ENCODE measurements at regions of chr17 and their contacts with region 1.

Region 1: GRCh38 chr17:17812211-17813057 is 24.4 kb downstream of the SREBF1 start:
- DNase-seq: peak; percentile 59
- H3K4me3 Mint-ChIP-seq: no peak overlapping the region
- H3K27ac Mint-ChIP-seq: no peak overlapping the region
- H3K4me1 Mint-ChIP-seq: peaks cover 21% of the 10 kb centered on the region
- H3K27me3 Mint-ChIP-seq: no peaks in the 10 kb centered on the region

Region 2: DNA sequence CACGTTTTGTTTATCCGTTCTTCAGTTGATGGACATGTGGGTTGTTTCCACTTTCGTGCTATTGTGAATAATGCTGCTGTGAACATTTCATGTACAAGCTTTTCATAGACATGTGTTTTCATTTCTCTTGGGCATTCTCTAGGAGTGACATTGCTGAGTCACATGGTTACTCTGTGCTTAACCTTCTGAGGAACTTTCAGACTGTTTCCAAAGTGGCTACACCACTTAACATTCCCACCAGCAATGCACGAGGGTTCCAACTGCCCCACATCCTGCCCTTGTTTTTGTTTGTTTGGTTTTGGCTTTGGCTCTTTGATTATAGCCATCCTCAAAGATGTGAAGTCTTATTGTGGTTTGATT is 206.7 kb before region 1 on chr17:
- CTCF ChIA-PET with region 1: no interaction called
- POLR2A ChIA-PET with region 1: no interaction called
- DNase-seq: no peak
- H3K4me3 Mint-ChIP-seq: no peak overlapping the region
- H3K27ac Mint-ChIP-seq: no peak overlapping the region
- H3K4me1 Mint-ChIP-seq: no peaks in the 10 kb centered on the region
- H3K27me3 Mint-ChIP-seq: no peaks in the 10 kb centered on the region

Region 3: GRCh38 chr17:17752089-17752820 is 60.2 kb before region 1 on chr17:
- CTCF ChIA-PET with region 1: no interaction called
- POLR2A ChIA-PET with region 1: no interaction called
- DNase-seq: peak; percentile 98
- H3K4me3 Mint-ChIP-seq: peak overlapping the region; percentile 96
- H3K27ac Mint-ChIP-seq: peak overlapping the region; percentile 96
- H3K4me1 Mint-ChIP-seq: peaks cover 59% of the 10 kb centered on the region
- H3K27me3 Mint-ChIP-seq: no peaks in the 10 kb centered on the region

Region 4: DNA sequence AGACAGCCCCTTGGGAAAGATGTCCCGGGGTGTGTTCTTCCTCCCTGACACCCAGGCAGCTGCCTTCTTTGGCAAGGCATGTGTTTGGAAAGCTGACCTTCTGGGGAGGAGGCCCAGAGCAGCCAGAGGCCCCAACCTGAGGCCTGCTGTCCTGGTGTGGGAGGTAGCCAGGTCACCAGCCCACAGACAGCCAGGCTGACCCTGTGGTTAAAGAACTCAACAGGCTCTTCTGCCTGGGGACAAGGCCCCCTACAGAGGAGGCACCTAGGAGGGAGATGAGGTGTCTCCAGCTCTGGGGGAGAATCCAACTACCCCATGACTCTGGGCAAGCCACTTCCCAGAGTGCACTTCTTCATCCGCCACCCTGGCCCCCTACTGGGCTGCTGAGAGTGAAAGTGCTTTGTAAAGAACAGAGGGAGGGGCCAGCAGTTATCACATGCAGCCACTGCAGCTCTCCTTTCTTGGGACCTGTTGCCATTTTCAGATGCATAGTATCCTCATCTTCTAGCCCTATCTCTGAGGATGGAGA is 37.5 kb after region 1 on chr17:
- CTCF ChIA-PET with region 1: interaction called, 89 read pairs
- POLR2A ChIA-PET with region 1: interaction called, 12 read pairs
- DNase-seq: peak; percentile 84
- H3K4me3 Mint-ChIP-seq: no peak overlapping the region
- H3K27ac Mint-ChIP-seq: peak overlapping the region; percentile 99
- H3K4me1 Mint-ChIP-seq: peaks cover 79% of the 10 kb centered on the region
- H3K27me3 Mint-ChIP-seq: no peaks in the 10 kb centered on the region

Region 5: GRCh38 chr17:17859909-17860765 is 47.7 kb after region 1 on chr17:
- CTCF ChIA-PET with region 1: interaction called, 89 read pairs
- POLR2A ChIA-PET with region 1: interaction called, 4 read pairs
- DNase-seq: peak; percentile 76
- H3K4me3 Mint-ChIP-seq: no peak overlapping the region
- H3K27ac Mint-ChIP-seq: no peak overlapping the region
- H3K4me1 Mint-ChIP-seq: peaks cover 34% of the 10 kb centered on the region
- H3K27me3 Mint-ChIP-seq: no peaks in the 10 kb centered on the region

Region 6: GRCh38 chr17:17888821-17889220 is 76.4 kb after region 1 on chr17:
- CTCF ChIA-PET with region 1: no interaction called
- POLR2A ChIA-PET with region 1: no interaction called
- DNase-seq: no peak
- H3K4me3 Mint-ChIP-seq: no peak overlapping the region
- H3K27ac Mint-ChIP-seq: no peak overlapping the region
- H3K4me1 Mint-ChIP-seq: no peaks in the 10 kb centered on the region
- H3K27me3 Mint-ChIP-seq: no peaks in the 10 kb centered on the region

Measured in activated CD4-positive, alpha-beta memory T cell treated with anti-CD3 and anti-CD28 coated beads, Interleukin-2, amount 10 ng/mL, durations not matched to agents 7 days and 5 days (primary cell).